ENCODE measurements at regions of chr6 and their contacts with region 1.

Region 1: DNA sequence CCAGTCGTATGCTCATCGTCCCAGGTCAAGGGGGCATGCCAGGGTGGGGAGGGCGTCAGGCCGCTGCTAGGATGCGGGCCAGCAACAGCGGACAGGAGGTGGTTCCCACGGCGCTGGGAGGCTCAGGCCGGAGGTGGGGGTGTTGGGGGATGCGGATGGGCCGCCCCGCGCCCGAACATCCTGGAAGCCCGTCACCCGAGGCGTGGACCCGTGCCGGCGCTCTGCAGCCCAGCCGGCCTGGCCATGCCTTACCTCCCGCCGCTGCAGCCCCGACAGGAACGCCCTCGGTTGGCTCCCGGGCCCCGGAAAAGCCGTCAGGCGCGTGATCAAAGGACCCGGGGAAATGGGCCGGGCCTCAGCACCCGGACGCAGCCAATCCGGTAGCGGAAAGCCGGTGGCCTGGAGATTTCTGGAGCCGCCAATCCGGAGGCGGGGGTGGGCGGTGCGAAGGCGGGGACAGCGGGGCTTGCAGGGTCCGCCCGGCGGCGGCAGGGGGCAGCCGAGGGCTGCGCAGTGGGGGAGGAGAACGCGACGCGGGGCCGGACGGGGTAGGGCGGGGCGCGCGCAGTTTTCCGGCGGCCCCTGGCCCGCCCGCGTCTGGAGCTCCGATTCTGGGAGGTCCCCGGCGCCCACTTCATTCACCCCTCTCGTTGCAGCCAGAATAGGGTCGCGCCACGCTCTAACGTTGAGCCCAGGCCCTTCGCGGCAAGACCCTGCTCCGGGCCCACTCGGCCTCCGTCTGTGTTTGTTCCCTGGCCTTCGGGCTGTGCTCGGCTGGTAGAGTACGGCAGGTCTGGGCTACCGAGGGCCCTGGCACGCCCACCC is at the start of gene SMIM29:
- H3K4me3 Mint-ChIP-seq: peak within 1 kb of the TSS; percentile 82
- H3K27ac Mint-ChIP-seq: peak within 1 kb of the TSS; percentile 89
- H3K4me1 Mint-ChIP-seq: peaks cover 76% of the 10 kb centered on the region
- H3K27me3 Mint-ChIP-seq: no peaks in the 10 kb centered on the region

Region 2: GRCh38 chr6:34161857-34162515 is 87.0 kb before region 1 on chr6:
- intact Hi-C with region 1: loop called (anchors 2 kb)
- H3K4me3 Mint-ChIP-seq: no peak overlapping the region
- H3K27ac Mint-ChIP-seq: no peak overlapping the region
- H3K4me1 Mint-ChIP-seq: peaks cover 47% of the 10 kb centered on the region
- H3K27me3 Mint-ChIP-seq: peaks cover 35% of the 10 kb centered on the region

Region 3: DNA sequence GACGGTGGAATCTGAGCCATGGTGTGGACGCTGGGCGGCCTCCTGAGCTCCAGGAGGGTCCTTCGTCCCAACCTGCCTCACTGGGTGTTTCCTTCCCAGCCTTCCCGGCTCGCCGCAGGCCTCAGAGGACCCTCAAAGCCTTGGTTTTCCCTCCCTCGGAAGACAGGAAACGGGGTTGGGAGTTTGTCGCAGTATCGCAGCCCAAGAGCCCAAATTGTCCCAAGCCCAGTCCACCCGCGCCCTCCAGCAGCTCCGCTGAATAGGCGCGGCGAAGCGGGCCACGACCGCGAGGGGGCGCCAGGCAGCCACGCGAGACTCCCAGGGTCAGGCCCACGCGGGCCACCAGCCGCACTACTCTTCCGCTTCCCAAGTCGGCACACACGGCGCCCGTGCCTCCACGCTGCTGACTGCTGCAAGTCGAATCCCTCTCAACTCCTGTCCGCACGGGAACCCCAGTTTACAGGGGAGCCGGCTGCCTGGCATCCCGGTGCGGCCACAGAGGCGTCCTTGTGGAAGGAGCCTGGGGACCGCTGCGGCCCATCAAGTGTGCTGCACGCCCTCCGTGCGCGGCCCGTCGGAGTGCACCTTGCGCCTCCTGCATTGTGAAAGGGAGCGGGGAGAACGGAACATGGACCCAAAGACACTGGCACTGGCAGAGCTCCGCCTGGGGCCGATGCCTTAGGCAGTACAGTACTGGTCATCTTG is 52.7 kb before region 1 on chr6:
- intact Hi-C with region 1: loop called (anchors 2 kb)
- H3K4me3 Mint-ChIP-seq: peak overlapping the region; percentile 88
- H3K27ac Mint-ChIP-seq: peak overlapping the region; percentile 42
- H3K4me1 Mint-ChIP-seq: peaks cover 12% of the 10 kb centered on the region
- H3K27me3 Mint-ChIP-seq: peaks cover 33% of the 10 kb centered on the region

Region 4: DNA sequence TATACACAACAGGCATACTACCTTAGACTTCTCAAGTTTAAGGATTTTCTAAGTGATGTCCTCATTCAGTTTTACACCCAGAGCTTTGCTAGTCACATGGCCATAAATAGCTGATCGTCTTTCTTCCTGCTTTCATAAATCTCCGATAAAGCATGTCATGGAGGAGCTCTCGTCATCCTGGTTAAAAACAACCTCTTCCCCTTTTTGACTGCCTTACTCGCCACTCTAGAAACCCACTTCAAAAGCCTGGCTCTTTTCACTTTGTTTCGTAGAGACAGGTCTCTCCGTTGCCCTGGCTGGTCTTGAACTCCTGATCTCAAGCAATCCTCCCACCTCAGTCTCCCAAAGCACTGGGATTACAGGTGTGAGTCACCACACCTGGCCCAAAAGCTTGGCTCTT is 66.8 kb after region 1 on chr6:
- intact Hi-C with region 1: loop called (anchors 10 kb)
- H3K4me3 Mint-ChIP-seq: no peak overlapping the region
- H3K27ac Mint-ChIP-seq: peak overlapping the region; percentile 92
- H3K4me1 Mint-ChIP-seq: peaks cover 50% of the 10 kb centered on the region
- H3K27me3 Mint-ChIP-seq: no peaks in the 10 kb centered on the region

Region 5: GRCh38 chr6:34392497-34393190 is 143.7 kb after region 1 on chr6 and contains the start of gene NUDT3:
- intact Hi-C with region 1: loop called (anchors 2 kb)
- H3K4me3 Mint-ChIP-seq: no peak within 1 kb of the TSS
- H3K27ac Mint-ChIP-seq: no peak within 1 kb of the TSS
- H3K4me1 Mint-ChIP-seq: peaks cover 15% of the 10 kb centered on the region
- H3K27me3 Mint-ChIP-seq: no peaks in the 10 kb centered on the region

Region 6: DNA sequence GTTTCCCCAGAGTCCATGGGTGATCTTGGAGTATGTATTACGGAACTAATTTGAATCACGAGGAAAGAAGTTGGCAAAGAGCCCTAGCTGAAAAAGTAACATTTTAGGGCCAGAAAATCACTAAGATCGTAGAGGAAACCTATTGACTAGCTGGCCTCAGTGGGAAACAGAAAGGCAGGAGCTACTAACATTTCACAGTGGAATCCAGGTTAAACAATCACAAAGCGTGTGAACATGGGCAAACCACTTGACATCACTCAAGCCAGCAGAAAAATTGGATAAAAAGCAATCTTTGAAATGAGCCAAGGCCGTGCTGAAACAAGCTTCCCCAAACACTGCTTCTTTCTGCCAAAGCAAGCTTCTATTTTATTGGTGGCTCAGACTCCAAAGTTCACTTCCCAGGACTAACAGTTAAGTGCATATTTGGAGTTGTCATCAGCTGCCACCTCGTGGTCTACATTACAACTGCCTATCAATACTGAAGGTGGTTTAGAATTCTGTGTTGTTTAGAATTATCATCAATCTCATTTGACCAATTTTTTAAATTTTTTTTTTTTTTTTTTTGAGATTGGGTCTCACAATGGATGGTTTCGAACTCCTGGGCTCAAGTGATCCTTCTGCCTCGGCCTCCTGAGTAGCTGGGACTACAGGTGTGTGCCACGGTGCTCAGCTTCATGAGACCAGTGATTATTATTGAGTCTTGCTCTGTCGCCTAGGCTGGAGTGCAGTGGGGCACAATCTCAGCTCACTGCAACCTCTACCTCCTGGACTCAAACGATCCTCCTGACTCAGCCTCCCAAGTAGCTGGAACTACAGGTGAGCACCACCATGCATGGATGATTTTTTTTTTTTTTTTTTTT is 166.3 kb after region 1 on chr6:
- intact Hi-C with region 1: loop called (anchors 1 kb)
- H3K4me3 Mint-ChIP-seq: no peak overlapping the region
- H3K27ac Mint-ChIP-seq: peak overlapping the region; percentile 50
- H3K4me1 Mint-ChIP-seq: peaks cover 17% of the 10 kb centered on the region
- H3K27me3 Mint-ChIP-seq: no peaks in the 10 kb centered on the region